Gastrocnemius medialis (tissue), 4 donors: ENCODE measurements at regions of chr3 and their contacts with region 1.

Region 1: DNA sequence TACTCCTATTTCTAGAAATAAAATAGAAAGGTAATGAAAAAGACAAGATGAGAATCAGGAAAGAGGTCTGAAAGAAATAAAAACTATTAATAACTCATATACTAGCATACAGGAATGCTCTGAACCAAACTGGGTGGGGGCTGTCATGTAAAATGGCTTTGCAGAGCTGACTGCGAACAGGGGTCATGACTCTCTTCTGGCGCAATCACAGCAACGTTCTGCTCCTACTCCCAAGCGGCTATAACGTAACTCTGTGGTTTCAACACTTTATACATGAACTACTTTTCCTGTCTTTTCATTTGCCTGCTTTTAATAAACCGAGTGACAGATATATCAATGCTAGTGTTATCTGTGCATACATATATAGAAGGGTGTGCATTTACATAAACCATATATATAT is 116.7 kb downstream of the DLG1 start:
- DNase-seq: peak; percentile 35 to 58
- ATAC-seq: peak; percentile 86 to 97
- H3K4me3 ChIP-seq: peak overlapping the region in 2 of 4 donors; percentile 2 to 8
- H3K27ac ChIP-seq: peak overlapping the region in 3 of 4 donors; percentile 42 to 53 (median 47)
- H3K4me1 ChIP-seq: peaks cover 45 to 54% of the 10 kb centered on the region in 2 donors
- H3K27me3 ChIP-seq: no peaks in the 10 kb centered on the region
- CTCF ChIP-seq: no peak
- POLR2A ChIP-seq: no peak

Region 2: GRCh38 chr3:197093871-197094270 is 87.9 kb before region 1 on chr3:
- in situ Hi-C with region 1: no loop called
- intact Hi-C with region 1: loop called (anchors 5 kb)
- DNase-seq: no peak
- ATAC-seq: no peak
- H3K4me3 ChIP-seq: no peak overlapping the region
- H3K27ac ChIP-seq: no peak overlapping the region
- H3K4me1 ChIP-seq: peaks cover 0 to 9% of the 10 kb centered on the region in 2 donors
- H3K27me3 ChIP-seq: no peaks in the 10 kb centered on the region
- CTCF ChIP-seq: no peak
- POLR2A ChIP-seq: no peak

Region 3: DNA sequence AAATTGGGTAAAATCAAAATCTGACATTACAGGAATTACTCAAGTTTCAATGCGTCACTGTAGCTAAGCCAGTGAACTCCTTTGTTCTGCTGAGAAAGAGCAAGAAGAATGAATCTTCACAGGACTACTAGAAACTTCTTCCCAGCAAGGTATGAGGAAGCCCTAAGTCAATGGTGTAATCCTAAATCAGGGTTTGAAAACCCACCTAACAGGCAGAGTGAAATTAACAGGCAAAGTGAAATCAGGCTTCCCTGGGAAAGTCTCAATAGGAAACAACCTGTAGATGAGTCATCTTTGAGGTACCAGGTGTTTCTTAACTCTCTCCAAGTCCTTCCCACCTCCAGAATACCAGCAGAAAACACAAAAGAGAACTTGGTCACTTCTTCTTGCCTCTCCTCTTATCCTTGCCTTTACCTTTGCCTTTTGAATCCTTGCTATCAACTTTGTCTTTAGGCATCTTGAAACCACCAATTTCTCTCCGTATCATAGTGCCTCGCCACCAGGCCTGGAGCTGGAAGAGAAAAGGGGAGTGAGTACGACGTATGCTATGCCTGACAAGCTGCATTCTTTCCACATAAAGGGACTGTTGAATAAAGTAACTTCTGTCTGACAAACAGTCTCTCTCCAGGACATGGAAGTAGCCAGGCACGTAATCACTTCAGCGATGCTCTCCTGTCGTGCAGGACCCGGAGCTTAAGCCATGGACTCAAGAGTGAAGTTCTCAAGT is 707.6 kb after region 1 on chr3:
- in situ Hi-C with region 1: no loop called
- intact Hi-C with region 1: no loop called
- DNase-seq: no peak
- ATAC-seq: no peak
- H3K4me3 ChIP-seq: no peak overlapping the region
- H3K27ac ChIP-seq: no peak overlapping the region
- H3K4me1 ChIP-seq: no peaks in the 10 kb centered on the region
- H3K27me3 ChIP-seq: no peaks in the 10 kb centered on the region
- CTCF ChIP-seq: no peak
- POLR2A ChIP-seq: no peak